Gastrocnemius medialis (tissue), 4 donors: ENCODE measurements at regions of chr2 and their contacts with region 1.

Region 1: DNA sequence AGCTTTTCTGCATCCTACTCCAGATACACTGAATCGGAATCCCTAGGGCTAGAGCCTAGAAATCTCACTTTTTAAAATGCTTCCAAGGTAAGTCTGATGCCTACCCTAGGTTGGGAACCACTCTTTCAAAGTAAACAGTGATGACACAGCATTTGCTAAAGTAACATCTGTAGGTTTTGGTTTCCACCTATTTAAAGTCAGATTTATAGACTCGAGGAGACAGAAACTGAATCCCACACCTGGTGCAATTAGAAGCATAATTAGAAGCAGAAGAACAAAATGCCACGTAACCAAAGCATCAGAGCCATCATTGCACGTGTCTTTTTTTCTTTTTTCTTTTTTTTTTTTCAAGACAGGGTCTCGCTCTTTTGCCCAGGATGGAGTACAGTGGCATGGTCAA is 40.9 kb downstream of the PDK1 start:
- DNase-seq: no peak
- ATAC-seq: no peak
- H3K4me3 ChIP-seq: no peak overlapping the region
- H3K27ac ChIP-seq: no peak overlapping the region
- H3K4me1 ChIP-seq: peaks cover 0 to 10% of the 10 kb centered on the region in 2 donors
- H3K27me3 ChIP-seq: no peaks in the 10 kb centered on the region
- CTCF ChIP-seq: no peak
- POLR2A ChIP-seq: no peak

Region 2: GRCh38 chr2:172704072-172704936 is 107.5 kb after region 1 on chr2:
- in situ Hi-C with region 1: loop called in 1 of 4 experiments (anchors 10 kb)
- intact Hi-C with region 1: no loop called
- DNase-seq: no peak
- ATAC-seq: no peak
- H3K4me3 ChIP-seq: no peak overlapping the region
- H3K27ac ChIP-seq: no peak overlapping the region
- H3K4me1 ChIP-seq: no peaks in the 10 kb centered on the region
- H3K27me3 ChIP-seq: no peaks in the 10 kb centered on the region
- CTCF ChIP-seq: peak in 1 of 5 experiments; percentile 33
- POLR2A ChIP-seq: no peak

Region 3: DNA sequence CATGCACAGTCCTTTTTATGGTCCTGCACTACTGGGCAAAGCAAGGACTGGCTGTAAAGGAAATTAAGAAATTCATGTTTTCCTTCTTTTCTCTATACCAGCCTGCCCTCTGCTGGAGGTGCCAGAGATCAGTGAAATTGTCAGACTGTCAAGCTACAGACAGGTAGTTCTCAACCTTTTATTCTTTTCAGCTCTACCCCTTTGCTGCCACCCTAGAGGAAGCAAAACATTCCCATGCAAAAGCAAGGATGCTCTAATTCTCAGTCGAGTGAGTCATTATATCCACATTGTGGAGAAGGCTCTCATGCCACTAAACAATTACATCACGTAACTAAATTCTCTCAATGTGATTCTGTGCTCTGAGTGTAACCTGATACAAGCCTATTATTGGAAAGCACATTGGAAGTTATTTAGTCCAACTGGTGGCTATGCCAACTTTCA is 113.8 kb after region 1 on chr2:
- in situ Hi-C with region 1: loop called in 2 of 4 experiments (anchors 10 kb)
- intact Hi-C with region 1: no loop called
- DNase-seq: no peak
- ATAC-seq: no peak
- H3K4me3 ChIP-seq: no peak overlapping the region
- H3K27ac ChIP-seq: no peak overlapping the region
- H3K4me1 ChIP-seq: no peaks in the 10 kb centered on the region
- H3K27me3 ChIP-seq: no peaks in the 10 kb centered on the region
- CTCF ChIP-seq: peak in 4 of 5 experiments; percentile 20 to 53 (median 37)
- POLR2A ChIP-seq: no peak

Region 4: DNA sequence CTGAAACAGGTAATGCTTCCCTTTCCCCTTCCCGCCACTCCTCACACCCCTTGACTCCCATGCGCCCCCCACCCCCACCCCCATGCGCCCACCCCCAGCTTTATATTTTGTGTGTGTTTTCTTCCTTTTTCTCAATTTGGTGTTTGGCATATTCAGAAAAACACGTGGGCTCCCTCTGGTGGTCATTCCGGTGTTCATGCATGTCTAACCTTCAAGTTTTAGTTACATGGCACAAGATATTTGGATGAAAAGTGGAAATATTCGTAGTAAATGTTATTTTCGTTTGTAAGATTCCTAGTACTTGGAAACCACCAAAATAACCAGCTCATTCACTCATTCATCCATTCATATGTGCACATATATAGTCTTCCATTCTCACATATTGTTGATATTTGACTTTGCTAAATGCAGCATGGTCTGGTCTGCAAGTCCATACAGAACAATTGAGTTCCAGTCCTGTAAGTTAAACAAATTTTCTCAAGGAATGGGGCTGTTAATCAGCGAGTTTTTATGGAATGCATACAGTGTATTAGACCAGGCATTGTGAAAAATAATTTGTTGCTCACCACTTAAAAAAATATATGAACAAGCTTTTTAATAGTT is 335.2 kb after region 1 on chr2:
- in situ Hi-C with region 1: no loop called
- intact Hi-C with region 1: no loop called
- DNase-seq: peak; percentile 10 to 28
- ATAC-seq: no peak
- H3K4me3 ChIP-seq: peak overlapping the region; percentile 11 to 42 (median 25)
- H3K27ac ChIP-seq: peak overlapping the region in 3 of 4 donors; percentile 51 to 67 (median 60)
- H3K4me1 ChIP-seq: peaks cover 10 to 20% of the 10 kb centered on the region in 2 donors
- H3K27me3 ChIP-seq: no peaks in the 10 kb centered on the region
- CTCF ChIP-seq: peak; percentile 40 to 81 (median 48)
- POLR2A ChIP-seq: no peak